HEK293 (cell line): ENCODE measurements at regions of chr2 and their contacts with region 1.

Region 1: DNA sequence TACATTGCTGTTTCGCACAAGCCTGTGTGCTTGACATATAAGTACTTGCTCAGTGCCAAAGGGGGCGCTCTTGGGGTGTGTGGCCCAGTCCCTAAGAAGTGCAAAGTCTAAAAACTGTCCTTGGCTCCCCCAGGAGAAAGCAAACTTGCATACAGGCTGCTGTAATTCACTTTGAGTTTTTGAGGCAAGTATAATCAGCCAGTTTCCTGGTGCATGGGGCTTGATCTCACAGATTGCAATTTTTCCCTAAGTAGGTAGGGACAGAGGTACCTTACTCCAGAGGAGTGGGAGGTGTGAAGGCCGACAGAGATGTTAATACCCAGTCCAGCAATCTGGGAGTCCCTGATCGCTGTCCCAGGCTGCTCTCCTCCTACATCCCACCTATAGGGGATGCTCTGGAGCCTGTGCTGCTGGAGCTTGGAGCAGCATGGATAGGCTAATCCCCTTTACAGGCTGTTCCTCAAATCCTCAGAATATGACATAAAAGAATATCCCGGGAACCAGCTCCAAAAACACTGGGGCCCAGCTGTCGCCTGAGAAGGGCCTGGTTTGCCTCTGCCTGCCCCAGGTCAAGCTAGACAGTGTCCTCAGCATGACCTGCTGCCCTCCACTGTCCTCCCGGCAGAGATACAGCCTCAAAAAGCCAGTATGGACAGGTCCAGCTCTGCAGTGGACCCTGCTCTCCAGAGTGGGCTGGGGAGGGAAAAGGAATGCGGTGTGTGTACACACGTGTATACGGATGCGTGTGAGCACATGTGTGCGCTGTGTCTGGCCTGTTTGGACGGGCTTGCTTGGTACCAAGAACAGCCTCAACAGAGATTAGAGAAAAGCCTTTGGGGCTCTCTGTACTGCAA is 136.5 kb upstream of the HAAO start:
- H3K4me3 ChIP-seq: no peak overlapping the region
- H3K27ac ChIP-seq: no peak overlapping the region; the same call in 1 of the 2 replicates
- H3K4me1 ChIP-seq: peaks cover 6% of the 10 kb centered on the region
- CTCF ChIP-seq: 0 out of 2 replicates have a peak, but pooled peaks have one; percentile 25

Region 2: GRCh38 chr2:42587526-42588117 is 341.3 kb before region 1 on chr2:
- CTCF ChIA-PET with region 1: no interaction called
- POLR2A ChIA-PET with region 1: no interaction called
- H3K4me3 ChIP-seq: no peak overlapping the region
- H3K27ac ChIP-seq: no peak overlapping the region
- H3K4me1 ChIP-seq: no peaks in the 10 kb centered on the region
- CTCF ChIP-seq: no peak

Region 3: GRCh38 chr2:42906557-42907411 is 22.1 kb before region 1 on chr2:
- CTCF ChIA-PET with region 1: interaction called, 13 read pairs
- POLR2A ChIA-PET with region 1: interaction called, 4 read pairs
- H3K4me3 ChIP-seq: 0 out of 2 replicates have a peak overlapping the region, but pooled peaks have one; percentile 3
- H3K27ac ChIP-seq: peak overlapping the region; percentile 86
- H3K4me1 ChIP-seq: peaks cover 22% of the 10 kb centered on the region
- CTCF ChIP-seq: no peak

Region 4: GRCh38 chr2:42944779-42945415 is 16.0 kb after region 1 on chr2:
- CTCF ChIA-PET with region 1: interaction called, 22 read pairs
- POLR2A ChIA-PET with region 1: no interaction called
- H3K4me3 ChIP-seq: no peak overlapping the region
- H3K27ac ChIP-seq: no peak overlapping the region
- H3K4me1 ChIP-seq: no peaks in the 10 kb centered on the region
- CTCF ChIP-seq: no peak

Region 5: DNA sequence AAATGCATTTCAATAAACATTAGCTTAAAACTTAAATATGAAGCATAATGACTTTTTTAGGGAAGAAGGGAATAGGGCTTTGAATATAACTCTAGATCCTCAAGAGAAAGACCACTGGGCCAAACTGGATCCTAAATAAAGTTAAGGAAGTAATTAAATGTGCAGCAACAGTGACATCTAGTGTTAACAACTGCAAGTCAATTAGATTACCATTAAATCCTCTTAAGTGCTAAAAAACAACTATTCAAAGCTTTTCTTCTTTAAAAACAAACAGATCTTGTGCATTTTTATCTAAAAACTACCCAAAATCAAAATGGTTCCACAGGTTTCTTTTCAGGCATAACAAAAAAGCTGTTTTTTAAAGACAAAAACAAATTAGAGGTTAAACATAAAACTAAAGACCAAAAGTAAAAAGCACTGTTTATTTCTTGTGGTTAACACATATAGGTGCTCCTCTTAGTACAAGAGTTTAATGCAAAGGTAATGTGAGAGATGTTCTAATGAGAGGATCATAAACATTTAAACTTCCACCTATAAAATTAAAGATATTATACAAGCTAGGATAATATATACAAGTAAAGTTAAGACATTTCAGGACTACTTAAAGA is 555.5 kb after region 1 on chr2:
- CTCF ChIA-PET with region 1: no interaction called
- POLR2A ChIA-PET with region 1: no interaction called
- H3K4me3 ChIP-seq: no peak overlapping the region
- H3K27ac ChIP-seq: no peak overlapping the region
- H3K4me1 ChIP-seq: no peaks in the 10 kb centered on the region
- CTCF ChIP-seq: no peak; the same call in 1 of the 2 replicates